Breast epithelium (tissue), 4 donors: ENCODE measurements at regions of chr17 and their contacts with region 1.

Region 1: GRCh38 chr17:80117491-80118401 is 16.4 kb downstream of the GAA start:
- DNase-seq: no peak
- H3K4me3 ChIP-seq: no peak overlapping the region
- H3K27ac ChIP-seq: no peak overlapping the region
- H3K4me1 ChIP-seq: no peaks in the 10 kb centered on the region
- H3K27me3 ChIP-seq: no peaks in the 10 kb centered on the region
- CTCF ChIP-seq: no peak
- POLR2A ChIP-seq: no peak

Region 2: DNA sequence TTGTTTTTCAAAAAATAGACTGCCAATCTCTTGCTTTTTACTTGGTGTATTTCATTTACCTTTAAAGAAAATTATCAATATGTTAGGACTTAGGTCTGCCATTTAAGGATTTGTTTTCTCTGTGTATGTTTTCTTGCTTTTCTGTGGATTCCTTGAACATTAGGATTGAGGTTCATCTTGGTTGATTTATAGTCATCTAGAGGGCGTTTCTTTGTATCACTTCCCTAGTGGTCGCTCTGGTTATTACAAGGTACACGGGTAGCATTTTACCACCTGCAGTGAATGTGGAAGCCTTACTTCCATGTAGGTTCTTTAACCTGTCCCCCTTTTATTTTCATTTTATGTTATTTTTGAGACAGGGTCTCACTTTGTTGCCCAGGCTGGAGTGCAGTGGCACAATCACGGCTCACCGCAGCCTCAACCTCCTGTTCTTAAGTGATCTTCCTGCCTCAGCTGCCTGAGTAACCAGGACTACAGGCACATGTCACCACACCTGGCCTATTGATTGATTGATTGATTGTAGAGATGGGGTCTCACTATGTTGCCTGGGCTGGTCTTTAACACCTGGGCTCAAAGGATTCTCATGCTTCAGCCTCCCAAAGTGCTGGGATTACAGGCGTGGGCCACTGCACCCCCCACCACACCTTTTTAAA is 243.3 kb before region 1 on chr17:
- intact Hi-C with region 1: no loop called
- DNase-seq: no peak
- H3K4me3 ChIP-seq: no peak overlapping the region
- H3K27ac ChIP-seq: no peak overlapping the region
- H3K4me1 ChIP-seq: no peaks in the 10 kb centered on the region
- H3K27me3 ChIP-seq: peaks cover 0 to 11% of the 10 kb centered on the region in 2 donors
- CTCF ChIP-seq: peak; percentile 19 to 36 (median 35)
- POLR2A ChIP-seq: no peak

Region 3: GRCh38 chr17:80092959-80093358 is 24.8 kb before region 1 on chr17:
- intact Hi-C with region 1: no loop called
- DNase-seq: no peak
- H3K4me3 ChIP-seq: no peak overlapping the region
- H3K27ac ChIP-seq: no peak overlapping the region
- H3K4me1 ChIP-seq: no peaks in the 10 kb centered on the region
- H3K27me3 ChIP-seq: no peaks in the 10 kb centered on the region
- CTCF ChIP-seq: no peak
- POLR2A ChIP-seq: no peak

Region 4: GRCh38 chr17:80130659-80131391 is 13.1 kb after region 1 on chr17:
- intact Hi-C with region 1: loop called (anchors 1 kb)
- DNase-seq: no peak
- H3K4me3 ChIP-seq: no peak overlapping the region
- H3K27ac ChIP-seq: no peak overlapping the region
- H3K4me1 ChIP-seq: no peaks in the 10 kb centered on the region
- H3K27me3 ChIP-seq: no peaks in the 10 kb centered on the region
- CTCF ChIP-seq: no peak
- POLR2A ChIP-seq: no peak